Activated CD8-positive, alpha-beta T cell treated with anti-CD3 and anti-CD28 coated beads, Interleukin-2, amount 10 ng/mL, durations not matched to agents 7 days and 5 days (primary cell): ENCODE measurements at regions of chr11 and their contacts with region 1.

Region 1: GRCh38 chr11:118956094-118956846 is at the start of gene UPK2:
- DNase-seq: peak; percentile 91
- ATAC-seq: peak; percentile 100
- H3K4me3 Mint-ChIP-seq: no peak within 1 kb of the TSS
- H3K27ac Mint-ChIP-seq: no peak within 1 kb of the TSS
- H3K4me1 Mint-ChIP-seq: peaks cover 5% of the 10 kb centered on the region
- H3K27me3 Mint-ChIP-seq: peaks cover 7% of the 10 kb centered on the region
- total RNA-seq, gene UPK2: not detected

Region 2: DNA sequence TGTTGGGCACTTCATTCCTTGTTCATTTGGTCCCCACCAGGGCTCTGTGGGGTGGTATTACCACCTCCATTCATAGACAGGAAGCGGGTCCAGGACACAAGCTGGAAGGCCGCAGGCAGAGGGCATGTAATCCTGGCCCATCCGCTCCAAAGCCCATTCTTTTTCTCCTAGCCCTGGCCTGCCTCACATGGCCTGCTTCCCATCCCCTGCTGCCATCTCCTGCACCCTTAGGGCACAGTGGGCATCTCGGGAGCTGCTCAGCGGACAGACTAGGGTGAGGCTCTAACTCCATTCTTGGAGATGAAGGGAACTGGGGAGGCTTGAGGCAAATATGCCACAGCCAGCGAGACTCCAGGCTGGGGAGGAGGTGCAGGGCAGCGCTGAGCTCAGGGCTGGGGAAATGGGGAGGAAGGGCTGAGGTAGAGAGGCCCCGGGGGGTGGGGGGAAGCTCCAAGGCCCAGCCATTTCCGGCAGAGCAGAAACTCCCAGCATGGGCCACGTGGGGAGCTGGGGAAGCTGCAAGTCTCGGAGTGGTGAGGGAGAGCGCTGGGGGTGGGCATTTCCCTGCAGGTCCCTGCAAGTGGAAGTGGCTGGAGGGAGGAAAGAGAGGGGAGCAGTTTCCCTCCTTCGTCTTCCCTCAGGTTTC is 16.2 kb before region 1 on chr11:
- CTCF ChIA-PET with region 1: interaction called, 12 read pairs
- POLR2A ChIA-PET with region 1: interaction called, 3 read pairs
- DNase-seq: peak; percentile 76
- ATAC-seq: peak; percentile 90
- H3K4me3 Mint-ChIP-seq: peak overlapping the region; percentile 29
- H3K27ac Mint-ChIP-seq: peak overlapping the region; percentile 82
- H3K4me1 Mint-ChIP-seq: peaks cover 37% of the 10 kb centered on the region
- H3K27me3 Mint-ChIP-seq: no peaks in the 10 kb centered on the region